AG04449 (cell line): ENCODE measurements at regions of chr5 and their contacts with region 1.

Region 1: GRCh38 chr5:83430130-83431010 is 41.2 kb upstream of the VCAN start:
- DNase-seq: no peak
- H3K4me3 ChIP-seq: no peak overlapping the region
- CTCF ChIP-seq: peak; percentile 90

Region 2: DNA sequence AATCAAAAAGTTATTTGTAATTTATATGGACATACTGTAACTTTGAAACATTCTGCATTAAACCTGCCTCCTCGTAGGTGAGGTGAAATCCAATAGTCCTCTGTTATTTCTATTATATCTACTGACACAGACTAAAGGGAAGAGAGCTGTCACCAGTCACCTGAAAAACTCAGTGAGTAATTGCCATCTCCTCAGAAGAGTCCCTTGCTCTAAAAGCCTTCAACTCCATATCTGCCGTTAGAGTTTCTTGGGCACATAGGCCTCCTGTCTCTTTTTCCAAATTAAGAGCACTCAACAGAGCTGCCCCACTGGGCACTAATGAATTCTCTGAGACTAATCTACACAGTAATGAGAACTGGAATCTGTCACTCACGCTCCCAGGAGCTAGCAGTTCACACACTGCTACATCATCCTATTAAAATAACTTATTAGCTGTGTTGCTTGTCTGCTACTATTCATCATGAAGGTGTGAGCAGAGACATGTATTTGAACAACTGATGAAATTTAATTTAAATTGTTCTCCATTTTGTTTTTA is 26.1 kb before region 1 on chr5:
- CTCF ChIA-PET with region 1: interaction called, 10 read pairs
- POLR2A ChIA-PET with region 1: no interaction called
- DNase-seq: no peak
- H3K4me3 ChIP-seq: no peak overlapping the region
- CTCF ChIP-seq: no peak

Region 3: GRCh38 chr5:83418356-83419321 is 11.7 kb before region 1 on chr5:
- CTCF ChIA-PET with region 1: interaction called, 47 read pairs
- POLR2A ChIA-PET with region 1: no interaction called
- DNase-seq: no peak
- H3K4me3 ChIP-seq: no peak overlapping the region
- CTCF ChIP-seq: no peak

Region 4: GRCh38 chr5:83441747-83442146 is 11.4 kb after region 1 on chr5:
- CTCF ChIA-PET with region 1: interaction called, 13 read pairs
- POLR2A ChIA-PET with region 1: no interaction called
- DNase-seq: no peak
- H3K4me3 ChIP-seq: no peak overlapping the region
- CTCF ChIP-seq: no peak

Region 5: DNA sequence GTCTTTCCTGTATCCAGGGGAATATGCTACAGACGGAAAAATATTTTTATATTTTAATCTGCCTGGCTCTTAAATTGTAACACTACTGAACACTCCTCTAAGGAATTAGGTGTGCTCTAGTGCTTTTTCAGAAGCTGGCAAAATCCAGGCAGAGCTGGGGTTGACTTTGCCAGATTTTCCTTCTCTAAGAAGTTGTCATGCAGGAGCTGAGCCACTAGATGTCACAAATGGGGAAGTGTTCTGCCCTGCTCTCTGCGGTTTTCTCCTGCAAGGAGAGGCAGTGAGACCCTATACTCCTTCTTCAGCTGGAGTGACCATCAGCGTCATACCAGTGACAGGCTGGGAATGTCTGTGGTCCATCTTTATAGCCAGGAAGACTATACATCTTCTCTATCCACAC is 177.8 kb after region 1 on chr5:
- CTCF ChIA-PET with region 1: no interaction called
- POLR2A ChIA-PET with region 1: no interaction called
- DNase-seq: no peak
- H3K4me3 ChIP-seq: no peak overlapping the region
- CTCF ChIP-seq: peak; percentile 62